Activated CD4-positive, alpha-beta T cell treated with anti-CD3 and anti-CD28 coated beads, Interleukin-2, amount 10 ng/mL, durations not matched to agents 24 days and 14 days (primary cell): ENCODE measurements at regions of chr5 and their contacts with region 1.

Region 1: GRCh38 chr5:40688127-40688761 is 8.5 kb downstream of the PTGER4 start:
- DNase-seq: peak; percentile 95
- H3K4me3 Mint-ChIP-seq: peak overlapping the region; percentile 99
- H3K27ac Mint-ChIP-seq: peak overlapping the region; percentile 92
- H3K4me1 Mint-ChIP-seq: peaks cover 62% of the 10 kb centered on the region
- H3K27me3 Mint-ChIP-seq: no peaks in the 10 kb centered on the region

Region 2: GRCh38 chr5:39716528-39717028 is 971.7 kb before region 1 on chr5:
- intact Hi-C with region 1: loop called (anchors 1 kb)
- DNase-seq: peak; percentile 75
- H3K4me3 Mint-ChIP-seq: no peak overlapping the region
- H3K27ac Mint-ChIP-seq: no peak overlapping the region
- H3K4me1 Mint-ChIP-seq: no peaks in the 10 kb centered on the region
- H3K27me3 Mint-ChIP-seq: peaks cover 2% of the 10 kb centered on the region

Region 3: GRCh38 chr5:40165794-40166728 is 522.2 kb before region 1 on chr5:
- intact Hi-C with region 1: loop called (anchors 1 kb)
- DNase-seq: peak; percentile 63
- H3K4me3 Mint-ChIP-seq: no peak overlapping the region
- H3K27ac Mint-ChIP-seq: no peak overlapping the region
- H3K4me1 Mint-ChIP-seq: peaks cover 5% of the 10 kb centered on the region
- H3K27me3 Mint-ChIP-seq: no peaks in the 10 kb centered on the region

Region 4: GRCh38 chr5:40333459-40334244 is 354.6 kb before region 1 on chr5:
- intact Hi-C with region 1: loop called (anchors 1 kb)
- DNase-seq: peak; percentile 59
- H3K4me3 Mint-ChIP-seq: no peak overlapping the region
- H3K27ac Mint-ChIP-seq: no peak overlapping the region
- H3K4me1 Mint-ChIP-seq: peaks cover 19% of the 10 kb centered on the region
- H3K27me3 Mint-ChIP-seq: no peaks in the 10 kb centered on the region

Region 5: DNA sequence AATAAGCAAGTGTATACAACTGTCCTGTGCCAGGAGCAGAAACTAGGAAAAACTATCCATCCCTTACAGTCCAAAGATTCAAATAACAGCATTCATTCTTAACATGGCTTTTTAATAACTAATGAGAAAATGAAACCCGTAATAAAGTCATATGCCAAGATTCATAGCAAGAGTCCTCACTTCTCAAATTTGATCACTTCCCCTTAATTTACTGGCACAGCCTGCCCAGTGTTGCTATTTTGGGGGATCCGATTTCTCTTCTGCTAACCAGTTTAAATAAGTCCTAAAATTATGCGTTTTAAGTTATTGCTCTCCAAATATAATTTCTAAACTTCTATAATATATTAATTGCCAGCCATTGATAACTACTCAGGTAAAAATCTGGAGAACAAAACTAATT is 185.5 kb before region 1 on chr5:
- intact Hi-C with region 1: loop called (anchors 5 kb)
- DNase-seq: no peak
- H3K4me3 Mint-ChIP-seq: no peak overlapping the region
- H3K27ac Mint-ChIP-seq: no peak overlapping the region
- H3K4me1 Mint-ChIP-seq: peaks cover 3% of the 10 kb centered on the region
- H3K27me3 Mint-ChIP-seq: no peaks in the 10 kb centered on the region

Region 6: DNA sequence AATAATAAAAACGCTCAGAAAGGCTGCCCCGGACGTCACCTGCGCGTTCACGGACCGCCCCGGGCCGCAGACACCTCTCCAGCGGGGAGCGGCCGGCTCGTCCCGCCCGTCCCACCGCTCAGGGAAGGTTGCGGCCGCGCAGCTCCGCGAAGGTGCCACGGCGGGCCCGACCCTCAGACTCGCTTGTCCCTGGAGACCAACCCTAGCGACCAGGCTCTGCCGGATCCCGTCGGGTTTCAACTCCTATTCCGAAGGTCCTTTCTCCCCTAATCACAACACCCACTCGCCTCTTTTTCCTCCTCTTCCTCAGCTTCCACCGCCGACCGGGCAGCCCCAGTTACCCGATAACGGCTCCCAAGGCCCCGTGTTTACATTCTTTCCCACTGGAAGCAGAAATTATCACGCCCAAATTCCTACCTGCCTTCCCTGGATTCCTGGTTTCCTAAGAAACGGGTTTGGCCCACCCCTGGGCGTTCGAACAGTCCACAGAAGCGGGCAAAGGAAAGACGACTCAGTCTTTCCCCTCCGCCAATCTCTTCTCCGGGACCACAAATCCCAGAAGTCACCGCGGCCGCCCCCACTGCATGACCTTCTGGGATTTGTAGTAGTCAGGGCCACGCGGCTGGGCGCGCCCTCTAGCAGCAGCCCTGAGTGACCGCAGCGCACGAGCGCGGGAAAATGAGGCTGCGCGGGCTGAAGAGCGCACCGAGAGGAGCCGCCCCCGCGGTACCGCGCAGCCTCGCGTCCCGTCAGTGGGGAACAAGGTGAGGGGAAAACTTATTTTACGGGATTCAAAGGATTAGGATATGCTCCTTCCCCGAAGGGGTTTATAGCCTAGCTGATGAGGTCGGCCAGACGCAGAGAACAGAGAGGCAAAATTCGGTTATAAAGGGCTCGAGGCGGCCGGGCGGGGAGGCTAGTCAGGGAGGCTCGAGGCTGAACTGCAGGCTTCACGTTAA is 67.4 kb after region 1 on chr5 and contains the start of gene TTC33:
- intact Hi-C with region 1: loop called (anchors 1 kb)
- DNase-seq: peak; percentile 98
- H3K4me3 Mint-ChIP-seq: no peak within 1 kb of the TSS
- H3K27ac Mint-ChIP-seq: no peak within 1 kb of the TSS
- H3K4me1 Mint-ChIP-seq: peaks cover 15% of the 10 kb centered on the region
- H3K27me3 Mint-ChIP-seq: no peaks in the 10 kb centered on the region
- total RNA-seq, gene TTC33: 22.7 and 23.1 TPM in 2 replicates